ENCODE measurements at regions of chr2 and their contacts with region 1.

Region 1: DNA sequence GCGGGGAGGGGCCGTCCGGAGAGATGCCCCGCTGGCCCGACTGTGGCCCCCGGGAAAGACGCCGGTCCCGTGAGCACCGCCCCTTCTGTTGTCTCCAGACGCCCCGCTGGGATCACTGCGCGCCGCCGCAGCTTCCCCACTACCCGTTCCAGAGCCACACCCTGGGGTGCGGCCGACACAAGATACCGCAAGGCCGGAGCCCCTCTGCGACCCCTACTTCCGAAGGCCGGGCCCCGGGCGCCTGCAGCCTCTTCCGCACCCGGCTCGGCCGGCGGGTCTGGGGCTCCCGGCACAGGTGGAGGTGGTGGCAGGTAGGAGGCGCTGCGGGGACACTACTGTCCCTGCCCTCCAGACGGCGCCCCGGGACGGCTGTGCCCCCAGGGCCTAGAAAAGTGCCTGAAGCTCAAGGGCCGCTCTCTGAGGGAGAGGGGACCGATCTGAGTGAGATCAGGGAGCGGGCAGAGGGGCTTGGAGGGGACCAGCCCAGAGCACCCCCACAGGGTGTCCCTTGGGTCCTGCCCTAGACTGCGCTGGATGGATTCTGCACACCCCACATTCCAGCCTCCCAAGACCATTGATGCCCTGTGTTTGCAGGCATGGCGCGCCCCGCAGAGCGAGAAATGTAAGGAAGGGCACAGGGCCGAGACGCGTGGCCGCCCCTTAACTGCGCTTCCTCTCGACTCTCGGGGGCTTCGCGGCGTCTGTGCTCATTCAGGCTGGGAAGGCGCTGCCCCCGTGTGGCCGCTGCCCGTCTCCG is 80.0 kb downstream of the GFPT1 start:
- DNase-seq: peak; percentile 93
- H3K4me3 ChIP-seq: peak overlapping the region; percentile 59 to 60
- H3K27ac ChIP-seq: peak overlapping the region; percentile 38 to 60; a peak in 2 of 4 replicates
- H3K4me1 ChIP-seq: peaks cover 0 to 16% of the 10 kb centered on the region in 2 experiments; a peak in 1 of 4 replicates
- H3K27me3 ChIP-seq: no peaks in the 10 kb centered on the region
- CTCF ChIP-seq: peak; percentile 79
- EP300 ChIP-seq: no peak
- RAD21 ChIP-seq: peak; percentile 96

Region 2: GRCh38 chr2:68993660-68994059 is 313.3 kb before region 1 on chr2:
- CTCF ChIA-PET with region 1: interaction called, 11 read pairs
- POLR2A ChIA-PET with region 1: no interaction called
- DNase-seq: no peak
- H3K4me3 ChIP-seq: no peak overlapping the region
- H3K27ac ChIP-seq: no peak overlapping the region
- H3K4me1 ChIP-seq: no peaks in the 10 kb centered on the region
- H3K27me3 ChIP-seq: no peaks in the 10 kb centered on the region
- CTCF ChIP-seq: no peak
- EP300 ChIP-seq: no peak
- RAD21 ChIP-seq: no peak

Region 3: DNA sequence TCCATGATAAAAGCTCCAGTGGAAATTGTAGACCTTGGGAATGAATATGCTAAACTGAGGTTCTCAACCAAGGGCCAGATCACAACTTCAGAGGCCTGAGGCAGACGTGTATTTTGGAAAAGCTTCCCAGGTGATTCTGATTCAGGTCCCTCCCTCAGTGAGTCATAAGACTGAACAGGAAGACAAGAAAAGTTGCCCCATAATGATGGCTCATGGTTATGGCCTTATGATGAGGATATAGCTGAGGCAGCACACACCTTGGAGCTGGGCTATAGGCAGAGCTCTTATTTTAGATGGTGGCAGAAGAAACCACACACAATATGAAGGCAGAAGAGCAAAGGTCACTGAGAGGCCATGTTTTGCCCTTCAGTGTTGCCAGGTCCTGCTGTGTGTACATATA is 284.5 kb before region 1 on chr2:
- CTCF ChIA-PET with region 1: interaction called, 24 read pairs
- POLR2A ChIA-PET with region 1: no interaction called
- DNase-seq: no peak
- H3K4me3 ChIP-seq: no peak overlapping the region
- H3K27ac ChIP-seq: no peak overlapping the region
- H3K4me1 ChIP-seq: peaks cover 22 to 36% of the 10 kb centered on the region in 2 experiments; a peak in 3 of 4 replicates
- H3K27me3 ChIP-seq: no peaks in the 10 kb centered on the region
- CTCF ChIP-seq: no peak
- EP300 ChIP-seq: no peak
- RAD21 ChIP-seq: no peak

Region 4: DNA sequence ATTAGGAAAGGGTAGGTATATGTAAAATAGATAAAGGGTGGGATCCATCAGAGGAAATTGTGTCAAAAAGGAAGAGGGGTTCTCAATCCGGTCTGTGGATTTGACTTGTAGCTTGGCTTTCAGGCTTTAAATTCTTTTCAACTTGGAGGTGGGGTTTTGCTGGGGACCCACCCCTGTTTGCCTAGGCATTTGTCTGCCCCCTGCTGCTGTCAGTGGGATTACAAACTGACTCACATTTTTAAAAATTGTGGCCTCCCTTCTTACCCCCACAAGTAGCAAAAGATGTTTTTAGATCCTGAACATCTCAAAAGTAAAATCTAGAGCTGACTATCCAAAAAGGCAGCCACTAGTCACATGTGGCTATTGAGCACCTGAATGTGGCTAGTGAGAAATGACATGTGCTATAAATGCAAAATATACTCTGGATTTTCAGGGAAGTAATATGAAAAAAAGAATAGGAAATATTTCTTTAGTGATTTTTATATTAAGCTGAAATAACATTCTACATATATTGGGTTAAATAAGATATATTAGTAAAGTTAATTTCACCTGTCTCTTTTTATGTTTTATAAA is 98.9 kb before region 1 on chr2:
- CTCF ChIA-PET with region 1: interaction called, 14 read pairs
- POLR2A ChIA-PET with region 1: no interaction called
- DNase-seq: no peak
- H3K4me3 ChIP-seq: no peak overlapping the region
- H3K27ac ChIP-seq: no peak overlapping the region
- H3K4me1 ChIP-seq: peaks cover 0 to 5% of the 10 kb centered on the region in 2 experiments; a peak in 1 of 4 replicates
- H3K27me3 ChIP-seq: no peaks in the 10 kb centered on the region
- CTCF ChIP-seq: peak; percentile 38
- EP300 ChIP-seq: no peak
- RAD21 ChIP-seq: peak; percentile 49

Measured in SK-N-SH (cell line).